CD4-positive, alpha-beta memory T cell (primary cell): ENCODE measurements at regions of chr6 and their contacts with region 1.

Region 1: DNA sequence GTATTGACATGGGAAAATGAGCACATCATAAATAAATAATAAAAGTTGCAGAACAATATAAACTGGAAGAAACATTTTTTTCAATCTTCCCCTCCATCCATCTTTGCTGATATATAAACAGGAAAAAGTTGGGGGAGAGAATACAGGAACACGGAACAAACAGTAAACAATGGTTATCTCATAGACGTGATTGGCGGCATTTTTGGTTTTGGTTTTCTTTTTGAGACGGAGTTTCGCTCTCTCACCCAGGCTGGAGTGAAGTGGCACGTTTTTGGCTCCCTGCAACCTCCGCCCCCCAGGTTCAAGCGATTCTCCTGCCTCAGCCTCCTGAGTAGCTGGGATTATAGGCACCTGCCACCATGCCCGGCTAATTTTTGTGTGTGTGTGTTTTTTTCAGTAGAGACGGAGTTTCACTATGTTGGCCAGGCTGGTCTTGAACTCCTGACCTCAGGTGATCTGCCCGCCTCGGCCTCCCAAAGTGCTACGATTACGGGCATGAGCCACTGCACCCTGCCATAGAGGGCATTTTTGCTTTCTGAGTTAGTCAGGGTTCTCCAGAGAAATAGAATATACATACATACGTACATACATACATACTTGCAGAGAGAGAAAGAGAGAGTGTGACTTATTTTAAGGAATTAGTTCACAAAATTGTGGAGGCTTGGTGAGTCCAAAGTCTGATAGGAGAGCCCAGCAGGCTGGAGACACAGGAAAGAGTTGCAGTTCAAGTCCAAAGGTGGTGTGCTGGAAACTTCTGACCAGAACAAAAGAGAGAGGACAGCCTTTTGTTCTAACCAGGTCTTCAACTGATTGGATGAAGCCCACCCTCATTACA is 22.6 kb downstream of the GNL1 start:
- DNase-seq: peak in 4 of 5 donors; percentile 31 to 52 (median 50)
- H3K4me3 ChIP-seq: no peak overlapping the region
- H3K4me3 Mint-ChIP-seq: peak overlapping the region; percentile 82 to 96 (median 92)
- H3K27ac ChIP-seq: peak overlapping the region; percentile 32
- H3K27ac Mint-ChIP-seq: peak overlapping the region; percentile 85 to 99 (median 95)
- H3K4me1 ChIP-seq: peaks cover 37% of the 10 kb centered on the region
- H3K4me1 Mint-ChIP-seq: peaks cover 25 to 45% (median 35%) of the 10 kb centered on the region in 4 donors
- H3K27me3 ChIP-seq: no peaks in the 10 kb centered on the region
- H3K27me3 Mint-ChIP-seq: no peaks in the 10 kb centered on the region

Region 2: GRCh38 chr6:30483677-30484279 is 49.9 kb before region 1 on chr6:
- CTCF ChIA-PET with region 1: interaction called, 416 read pairs
- POLR2A ChIA-PET with region 1: interaction called, 26 read pairs
- intact Hi-C with region 1: loop called (anchors 1 kb)
- DNase-seq: peak in 4 of 5 donors; percentile 44 to 57 (median 48)
- H3K4me3 ChIP-seq: no peak overlapping the region
- H3K4me3 Mint-ChIP-seq: no peak overlapping the region
- H3K27ac ChIP-seq: no peak overlapping the region
- H3K27ac Mint-ChIP-seq: peak overlapping the region in 2 of 7 donors; percentile 8 to 29
- H3K4me1 ChIP-seq: peaks cover 24% of the 10 kb centered on the region
- H3K4me1 Mint-ChIP-seq: peaks cover 27 to 42% (median 31%) of the 10 kb centered on the region in 4 donors
- H3K27me3 ChIP-seq: peaks cover 22% of the 10 kb centered on the region
- H3K27me3 Mint-ChIP-seq: peaks cover 18 to 22% of the 10 kb centered on the region in 2 donors

Region 3: GRCh38 chr6:30489081-30490025 is 44.3 kb before region 1 on chr6 and contains the start of gene HLA-E:
- CTCF ChIA-PET with region 1: interaction called, 416 read pairs
- POLR2A ChIA-PET with region 1: interaction called, 346 read pairs
- intact Hi-C with region 1: loop called (anchors 1 kb)
- DNase-seq: peak; percentile 92 to 98 (median 96)
- H3K4me3 ChIP-seq: peak within 1 kb of the TSS; percentile 98 to 99
- H3K4me3 Mint-ChIP-seq: peak within 1 kb of the TSS; percentile 98 to 99 (median 99)
- H3K27ac ChIP-seq: peak within 1 kb of the TSS; percentile 95
- H3K27ac Mint-ChIP-seq: peak within 1 kb of the TSS; percentile 97 to 99 (median 99)
- H3K4me1 ChIP-seq: peaks cover 30% of the 10 kb centered on the region
- H3K4me1 Mint-ChIP-seq: peaks cover 28 to 60% (median 44%) of the 10 kb centered on the region in 4 donors
- H3K27me3 ChIP-seq: no peaks in the 10 kb centered on the region
- H3K27me3 Mint-ChIP-seq: no peaks in the 10 kb centered on the region
- total RNA-seq, gene HLA-E: 1,097 to 1,122 TPM

Region 4: DNA sequence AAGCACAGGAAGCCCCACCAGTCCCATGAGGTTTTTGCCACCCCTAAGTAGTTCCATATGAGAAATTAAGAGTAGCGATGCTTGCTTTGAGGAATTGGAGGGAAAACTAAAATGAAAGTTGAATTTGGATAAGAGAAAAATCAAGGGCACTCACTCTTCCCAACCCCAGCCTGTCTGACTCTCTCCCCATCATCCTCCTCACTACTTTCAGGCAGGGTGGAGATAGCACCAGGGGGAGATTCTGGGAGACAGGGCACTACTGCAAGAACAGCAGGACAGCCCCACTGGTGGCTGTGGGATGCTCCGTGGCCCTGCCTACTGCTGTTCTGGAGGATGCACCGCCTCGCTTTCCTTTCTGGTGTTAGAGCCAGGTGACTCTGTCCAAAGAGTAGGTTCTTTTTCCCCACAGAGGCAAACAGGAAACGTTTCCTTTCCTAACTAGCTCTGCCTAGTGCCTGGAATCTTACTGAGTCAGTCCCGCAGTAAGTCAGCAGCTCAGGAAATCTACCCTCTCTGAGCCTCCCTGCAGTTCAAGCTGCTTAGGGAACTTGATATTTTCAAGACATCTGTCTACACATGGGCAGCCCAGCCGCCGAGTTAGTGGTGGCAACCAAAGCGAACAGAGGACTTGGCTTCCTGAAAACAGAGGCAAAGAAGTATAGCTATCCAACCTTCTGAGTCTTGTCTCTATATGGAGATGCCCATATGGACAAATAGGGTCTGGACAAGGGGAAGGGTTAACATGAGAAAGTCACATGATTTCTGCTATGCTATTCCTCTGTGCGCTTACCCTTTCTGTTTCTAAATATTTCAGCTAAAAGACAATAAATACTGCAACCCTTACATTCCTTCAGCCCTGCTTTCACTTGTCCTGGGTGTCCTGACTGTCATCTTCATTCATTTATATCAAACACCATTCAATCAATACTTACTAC is 33.0 kb before region 1 on chr6:
- CTCF ChIA-PET with region 1: interaction called, 128 read pairs
- POLR2A ChIA-PET with region 1: interaction called, 346 read pairs
- intact Hi-C with region 1: no loop called
- DNase-seq: no peak
- H3K4me3 ChIP-seq: peak overlapping the region in 1 of 2 donors; percentile 6
- H3K4me3 Mint-ChIP-seq: peak overlapping the region; percentile 70 to 85 (median 80)
- H3K27ac ChIP-seq: no peak overlapping the region
- H3K27ac Mint-ChIP-seq: peak overlapping the region; percentile 25 to 89 (median 73)
- H3K4me1 ChIP-seq: peaks cover 34% of the 10 kb centered on the region
- H3K4me1 Mint-ChIP-seq: peaks cover 24 to 42% (median 32%) of the 10 kb centered on the region in 4 donors
- H3K27me3 ChIP-seq: no peaks in the 10 kb centered on the region
- H3K27me3 Mint-ChIP-seq: no peaks in the 10 kb centered on the region

Region 5: GRCh38 chr6:30508890-30509736 is 24.6 kb before region 1 on chr6:
- CTCF ChIA-PET with region 1: interaction called, 54 read pairs
- POLR2A ChIA-PET with region 1: interaction called, 111 read pairs
- intact Hi-C with region 1: loop called (anchors 2 kb)
- DNase-seq: peak; percentile 72 to 85 (median 82)
- H3K4me3 ChIP-seq: peak overlapping the region; percentile 1 to 26
- H3K4me3 Mint-ChIP-seq: peak overlapping the region; percentile 66 to 86 (median 80)
- H3K27ac ChIP-seq: peak overlapping the region; percentile 32
- H3K27ac Mint-ChIP-seq: peak overlapping the region; percentile 78 to 96 (median 89)
- H3K4me1 ChIP-seq: peaks cover 77% of the 10 kb centered on the region
- H3K4me1 Mint-ChIP-seq: peaks cover 38 to 73% (median 52%) of the 10 kb centered on the region in 4 donors
- H3K27me3 ChIP-seq: no peaks in the 10 kb centered on the region
- H3K27me3 Mint-ChIP-seq: no peaks in the 10 kb centered on the region

Region 6: GRCh38 chr6:30515932-30516753 is 17.5 kb before region 1 on chr6:
- CTCF ChIA-PET with region 1: interaction called, 54 read pairs
- POLR2A ChIA-PET with region 1: interaction called, 111 read pairs
- intact Hi-C with region 1: loop called (anchors 1 kb)
- DNase-seq: peak; percentile 91 to 98 (median 96)
- H3K4me3 ChIP-seq: peak overlapping the region; percentile 42 to 64
- H3K4me3 Mint-ChIP-seq: peak overlapping the region; percentile 85 to 92 (median 88)
- H3K27ac ChIP-seq: peak overlapping the region; percentile 91
- H3K27ac Mint-ChIP-seq: peak overlapping the region; percentile 95 to 99 (median 99)
- H3K4me1 ChIP-seq: peaks cover 66% of the 10 kb centered on the region
- H3K4me1 Mint-ChIP-seq: peaks cover 28 to 78% (median 49%) of the 10 kb centered on the region in 4 donors
- H3K27me3 ChIP-seq: no peaks in the 10 kb centered on the region
- H3K27me3 Mint-ChIP-seq: no peaks in the 10 kb centered on the region

Region 7: DNA sequence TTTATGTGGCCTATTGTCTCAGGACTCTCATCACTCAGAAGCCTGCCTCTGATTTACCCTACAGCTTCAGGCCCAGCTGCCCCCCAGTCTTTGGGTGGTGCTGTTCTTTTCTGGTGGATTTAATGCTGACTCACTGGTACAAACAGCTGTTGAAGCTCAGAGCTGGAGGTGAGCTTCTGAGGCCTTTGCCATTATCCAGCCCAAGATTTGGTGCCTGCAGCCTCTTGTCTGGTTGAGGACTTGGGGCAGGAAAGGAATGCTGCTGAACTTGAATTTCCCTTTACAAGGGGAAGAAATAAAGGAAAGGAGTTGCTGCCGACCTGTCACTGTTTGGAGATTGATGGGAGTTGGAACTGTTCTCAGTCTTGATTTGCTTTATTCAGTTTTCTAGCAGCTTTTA is 57.3 kb after region 1 on chr6:
- CTCF ChIA-PET with region 1: interaction called, 242 read pairs
- POLR2A ChIA-PET with region 1: no interaction called
- intact Hi-C with region 1: no loop called
- DNase-seq: no peak
- H3K4me3 ChIP-seq: no peak overlapping the region
- H3K4me3 Mint-ChIP-seq: no peak overlapping the region
- H3K27ac ChIP-seq: no peak overlapping the region
- H3K27ac Mint-ChIP-seq: peak overlapping the region in 3 of 7 donors; percentile 30 to 86 (median 48)
- H3K4me1 ChIP-seq: no peaks in the 10 kb centered on the region
- H3K4me1 Mint-ChIP-seq: peaks cover 0 to 7% (median 4%) of the 10 kb centered on the region in 4 donors
- H3K27me3 ChIP-seq: no peaks in the 10 kb centered on the region
- H3K27me3 Mint-ChIP-seq: no peaks in the 10 kb centered on the region